Heart right ventricle (tissue), 16 donors: ENCODE measurements at regions of chr12 and their contacts with region 1.

Region 1: DNA sequence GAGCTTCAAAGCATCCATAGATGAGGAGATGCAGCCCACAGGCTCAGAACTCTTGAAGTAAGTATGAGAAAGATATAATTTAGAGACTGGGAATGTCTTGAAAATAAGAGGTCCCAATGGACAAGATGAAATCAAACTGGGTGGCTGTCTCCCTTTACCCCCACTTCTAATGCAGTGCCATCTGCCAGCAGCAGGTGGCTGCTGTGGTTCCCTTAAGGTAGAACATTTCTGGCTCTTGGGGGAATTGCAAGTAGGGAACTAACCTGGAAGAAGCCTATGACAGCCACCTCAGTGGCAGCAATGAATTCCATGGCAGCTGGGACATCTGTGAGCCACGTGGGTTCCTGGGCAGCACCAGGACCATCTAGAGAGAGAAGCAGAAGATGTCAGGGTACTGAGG is 648 bp downstream of the ERP27 start:
- DNase-seq: no peak
- ATAC-seq: no peak
- H3K4me3 ChIP-seq: no peak overlapping the region
- H3K27ac ChIP-seq: no peak overlapping the region
- H3K4me1 ChIP-seq: peaks cover 0 to 5% (median 0%) of the 10 kb centered on the region in 9 donors
- H3K27me3 ChIP-seq: no peaks in the 10 kb centered on the region
- CTCF ChIP-seq: peak in 1 of 9 donors; percentile 21

Region 2: GRCh38 chr12:14989790-14990189 is 52.1 kb after region 1 on chr12:
- intact Hi-C with region 1: loop called in 2 of 10 experiments (anchors 10 kb)
- DNase-seq: no peak
- ATAC-seq: peak in 1 of 8 donors; percentile 25
- H3K4me3 ChIP-seq: no peak overlapping the region
- H3K27ac ChIP-seq: peak overlapping the region in 1 of 10 donors; percentile 34
- H3K4me1 ChIP-seq: peaks cover 0 to 53% (median 0%) of the 10 kb centered on the region in 9 donors
- H3K27me3 ChIP-seq: no peaks in the 10 kb centered on the region
- CTCF ChIP-seq: no peak